ENCODE measurements at regions of chr6 and their contacts with region 1.

Region 1: GRCh38 chr6:137313928-137314855 is 95.0 kb upstream of the IFNGR1 start:
- DNase-seq: peak; percentile 68 to 84 (median 76)
- ATAC-seq: peak; percentile 67 to 96 (median 90)
- H3K4me3 ChIP-seq: peak overlapping the region in 7 of 12 donors; percentile 6 to 40 (median 23)
- H3K27ac ChIP-seq: no peak overlapping the region
- H3K4me1 ChIP-seq: peaks cover 0 to 23% (median 10%) of the 10 kb centered on the region in 12 donors
- H3K27me3 ChIP-seq: no peaks in the 10 kb centered on the region
- CTCF ChIP-seq: peak; percentile 64 to 86 (median 78)
- POLR2A ChIP-seq: no peak

Region 2: GRCh38 chr6:137136065-137136464 is 178.1 kb before region 1 on chr6:
- intact Hi-C with region 1: no loop called
- DNase-seq: no peak
- ATAC-seq: no peak
- H3K4me3 ChIP-seq: no peak overlapping the region
- H3K27ac ChIP-seq: no peak overlapping the region
- H3K4me1 ChIP-seq: no peaks in the 10 kb centered on the region
- H3K27me3 ChIP-seq: no peaks in the 10 kb centered on the region
- CTCF ChIP-seq: peak in 7 of 12 donors; percentile 11 to 45 (median 33)
- POLR2A ChIP-seq: no peak

Region 3: GRCh38 chr6:137165375-137166246 is 148.6 kb before region 1 on chr6:
- intact Hi-C with region 1: loop called in 1 of 10 experiments (anchors 10 kb)
- DNase-seq: no peak
- ATAC-seq: no peak
- H3K4me3 ChIP-seq: no peak overlapping the region
- H3K27ac ChIP-seq: peak overlapping the region in 1 of 12 donors; percentile 37
- H3K4me1 ChIP-seq: peaks cover 0 to 56% (median 0%) of the 10 kb centered on the region in 12 donors
- H3K27me3 ChIP-seq: no peaks in the 10 kb centered on the region
- CTCF ChIP-seq: peak in 4 of 12 donors; percentile 19 to 44 (median 28)
- POLR2A ChIP-seq: no peak

Region 4: DNA sequence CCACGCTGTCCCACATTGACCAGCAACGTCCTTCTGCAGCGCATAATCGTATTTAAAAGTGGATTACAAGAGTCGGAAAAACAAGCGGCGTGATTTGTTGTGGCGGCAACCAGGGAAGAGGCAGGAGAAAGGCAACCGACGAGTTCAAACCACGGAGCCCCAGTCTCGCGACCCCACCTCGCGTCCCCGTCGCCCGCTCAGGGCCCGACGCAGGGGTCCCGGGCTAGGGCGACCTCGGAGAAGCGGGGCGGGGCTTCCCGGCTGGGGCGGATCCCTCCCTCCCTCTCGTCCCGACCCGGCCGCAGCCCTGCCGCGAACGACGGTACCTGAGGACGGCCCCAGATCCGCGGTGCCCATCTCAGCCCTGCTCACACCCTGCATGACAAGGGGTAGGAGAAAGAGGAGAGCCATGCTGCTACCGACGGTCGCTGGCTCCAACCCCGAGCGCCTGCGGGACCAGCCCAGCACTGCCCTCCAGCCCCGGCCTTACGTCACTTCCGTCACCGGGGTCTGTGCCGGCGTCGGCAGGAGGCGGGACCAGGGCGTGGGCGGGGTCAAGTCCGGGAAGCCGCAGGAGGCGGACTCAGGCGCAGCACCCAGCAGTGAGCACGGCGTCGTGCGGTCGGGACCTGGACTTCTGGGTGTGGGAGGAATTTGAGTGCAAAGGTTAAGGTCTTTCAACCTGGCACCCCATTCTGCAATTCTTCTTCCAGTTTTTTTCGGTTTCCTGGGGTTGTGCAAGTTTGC is 95.1 kb before region 1 on chr6 and contains the start of gene IFNGR1:
- intact Hi-C with region 1: loop called in 3 of 10 experiments (anchors 1 to 10 kb)
- DNase-seq: peak; percentile 98 to 99 (median 99)
- ATAC-seq: peak; percentile 92 to 97 (median 96)
- H3K4me3 ChIP-seq: peak within 1 kb of the TSS; percentile 73 to 98 (median 84)
- H3K27ac ChIP-seq: peak within 1 kb of the TSS; percentile 96 to 100 (median 99)
- H3K4me1 ChIP-seq: peaks cover 11 to 87% (median 58%) of the 10 kb centered on the region in 12 donors
- H3K27me3 ChIP-seq: no peaks in the 10 kb centered on the region
- CTCF ChIP-seq: no peak
- POLR2A ChIP-seq: peak; percentile 89 to 98
- total RNA-seq, gene IFNGR1: 68.6 to 152 (median 79.2) TPM

Region 5: GRCh38 chr6:137271245-137272183 is 42.7 kb before region 1 on chr6:
- intact Hi-C with region 1: loop called (anchors 1 to 5 kb)
- DNase-seq: no peak
- ATAC-seq: peak in 3 of 4 donors; percentile 57 to 85 (median 73)
- H3K4me3 ChIP-seq: no peak overlapping the region
- H3K27ac ChIP-seq: no peak overlapping the region
- H3K4me1 ChIP-seq: peaks cover 0 to 14% (median 0%) of the 10 kb centered on the region in 12 donors
- H3K27me3 ChIP-seq: no peaks in the 10 kb centered on the region
- CTCF ChIP-seq: peak; percentile 78 to 96 (median 92)
- POLR2A ChIP-seq: no peak

Region 6: DNA sequence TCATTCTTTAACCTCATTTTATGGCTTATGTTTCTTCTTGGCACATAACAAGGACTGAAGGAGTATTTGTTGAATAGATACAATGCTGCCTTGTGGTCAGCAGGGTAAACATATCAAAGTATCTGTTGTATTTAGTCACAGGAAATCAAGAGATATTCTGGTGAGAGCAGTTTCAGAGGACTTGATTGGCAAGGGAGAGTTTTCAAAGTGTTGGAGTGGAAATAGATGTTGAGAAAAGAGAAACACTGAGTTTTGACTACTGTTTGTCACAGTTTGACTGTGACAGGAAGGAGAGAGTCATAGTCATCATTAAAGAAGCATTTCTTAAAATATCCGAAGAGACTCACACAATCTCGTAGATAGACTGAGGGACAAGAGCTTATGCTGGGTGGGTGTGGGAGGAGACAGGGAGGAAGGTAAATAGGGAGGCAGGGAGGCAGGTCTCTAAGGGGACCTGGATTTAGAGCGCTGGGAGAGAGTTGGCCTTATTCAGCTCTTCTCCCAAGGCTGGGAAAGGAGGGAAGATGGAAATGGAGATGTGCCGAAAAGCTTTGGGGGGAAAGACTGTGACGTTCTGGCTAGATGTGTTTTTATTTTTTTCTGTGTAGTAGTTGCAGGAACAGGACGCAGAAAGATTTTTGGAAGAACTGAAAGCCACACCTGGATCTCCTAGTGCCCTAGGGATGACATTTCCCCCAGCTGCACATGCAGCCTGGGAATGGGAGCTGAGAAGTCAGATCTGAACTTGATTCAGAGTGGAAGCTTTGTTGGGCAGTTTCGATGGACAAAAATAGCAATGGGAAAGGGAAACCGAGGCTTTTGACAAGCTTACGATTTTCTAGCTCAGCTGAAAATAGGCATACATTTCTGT is 30.0 kb before region 1 on chr6:
- intact Hi-C with region 1: loop called in 1 of 10 experiments (anchors 5 kb)
- DNase-seq: no peak
- ATAC-seq: no peak
- H3K4me3 ChIP-seq: no peak overlapping the region
- H3K27ac ChIP-seq: no peak overlapping the region
- H3K4me1 ChIP-seq: peaks cover 0 to 3% (median 0%) of the 10 kb centered on the region in 12 donors
- H3K27me3 ChIP-seq: no peaks in the 10 kb centered on the region
- CTCF ChIP-seq: no peak
- POLR2A ChIP-seq: no peak

Measured in heart left ventricle (tissue), 16 donors.